ENCODE measurements at regions of chr9 and their contacts with region 1.

Region 1: DNA sequence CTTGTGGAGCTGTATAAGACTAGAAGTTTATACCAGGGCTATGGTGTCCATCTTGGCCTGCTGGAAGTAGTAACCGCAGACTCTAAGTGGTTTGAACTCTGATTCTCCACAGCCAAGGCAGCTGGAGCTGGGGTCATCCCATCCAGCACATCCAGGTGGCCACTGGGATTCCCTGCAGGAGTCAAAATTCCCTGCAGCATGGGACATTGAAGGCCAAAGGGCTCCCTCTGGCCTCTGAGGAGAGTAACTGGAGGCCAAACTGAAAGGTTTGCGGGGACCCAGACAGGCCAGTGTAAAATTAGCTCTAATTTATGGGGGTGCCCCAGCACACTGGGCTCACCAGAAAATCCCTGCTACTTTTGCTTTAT is 12.2 kb upstream of the PRXL2C start:
- DNase-seq: no peak
- ATAC-seq: no peak
- H3K4me3 ChIP-seq: no peak overlapping the region
- H3K27ac ChIP-seq: no peak overlapping the region
- H3K4me1 ChIP-seq: peaks cover 0 to 4% (median 0%) of the 10 kb centered on the region in 9 donors
- H3K27me3 ChIP-seq: no peaks in the 10 kb centered on the region
- CTCF ChIP-seq: no peak

Region 2: GRCh38 chr9:96040591-96041461 is 626.5 kb before region 1 on chr9:
- intact Hi-C with region 1: no loop called
- DNase-seq: no peak
- ATAC-seq: no peak
- H3K4me3 ChIP-seq: no peak overlapping the region
- H3K27ac ChIP-seq: no peak overlapping the region
- H3K4me1 ChIP-seq: no peaks in the 10 kb centered on the region
- H3K27me3 ChIP-seq: peaks cover 0 to 6% (median 0%) of the 10 kb centered on the region in 7 donors
- CTCF ChIP-seq: no peak

Region 3: GRCh38 chr9:96327694-96328352 is 339.5 kb before region 1 on chr9:
- intact Hi-C with region 1: loop called (anchors 2 to 5 kb)
- DNase-seq: peak in 1 of 2 donors; percentile 52
- ATAC-seq: peak; percentile 29 to 86 (median 70)
- H3K4me3 ChIP-seq: no peak overlapping the region
- H3K27ac ChIP-seq: no peak overlapping the region
- H3K4me1 ChIP-seq: no peaks in the 10 kb centered on the region
- H3K27me3 ChIP-seq: no peaks in the 10 kb centered on the region
- CTCF ChIP-seq: peak; percentile 81 to 90 (median 85)

Region 4: GRCh38 chr9:96441798-96442445 is 225.4 kb before region 1 on chr9:
- intact Hi-C with region 1: loop called in 1 of 10 experiments (anchors 2 kb)
- DNase-seq: no peak
- ATAC-seq: no peak
- H3K4me3 ChIP-seq: no peak overlapping the region
- H3K27ac ChIP-seq: no peak overlapping the region
- H3K4me1 ChIP-seq: no peaks in the 10 kb centered on the region
- H3K27me3 ChIP-seq: no peaks in the 10 kb centered on the region
- CTCF ChIP-seq: peak; percentile 11 to 54 (median 45)

Region 5: GRCh38 chr9:96574931-96575351 is 92.4 kb before region 1 on chr9:
- intact Hi-C with region 1: loop called in 1 of 10 experiments (anchors 5 kb)
- DNase-seq: no peak
- ATAC-seq: peak in 4 of 8 donors; percentile 37 to 80 (median 64)
- H3K4me3 ChIP-seq: no peak overlapping the region
- H3K27ac ChIP-seq: no peak overlapping the region
- H3K4me1 ChIP-seq: peaks cover 0 to 3% (median 0%) of the 10 kb centered on the region in 9 donors
- H3K27me3 ChIP-seq: peaks cover 0 to 9% (median 0%) of the 10 kb centered on the region in 7 donors
- CTCF ChIP-seq: no peak

Region 6: DNA sequence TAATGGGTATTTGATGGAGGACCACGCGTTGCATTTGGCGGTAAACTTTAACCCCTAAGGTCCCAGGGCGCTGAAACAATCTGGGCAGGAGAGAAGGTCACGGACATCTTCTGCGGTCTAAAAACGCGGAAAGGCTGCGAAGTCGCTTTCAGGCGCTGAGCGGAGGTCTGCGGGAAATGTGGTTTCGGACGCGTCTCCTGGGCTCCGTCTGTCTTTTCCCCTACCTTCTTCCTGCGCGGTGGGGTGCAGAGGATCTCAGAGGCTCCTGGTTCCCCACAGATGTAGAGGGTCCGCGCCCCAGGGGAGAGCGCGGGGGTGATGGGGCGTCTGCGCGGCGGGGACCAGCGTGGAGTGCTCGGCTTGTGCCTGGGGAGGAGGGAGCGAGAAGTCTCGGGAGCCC is 52.2 kb after region 1 on chr9:
- intact Hi-C with region 1: no loop called
- DNase-seq: no peak
- ATAC-seq: no peak
- H3K4me3 ChIP-seq: peak overlapping the region in 8 of 10 donors; percentile 23 to 54 (median 38)
- H3K27ac ChIP-seq: no peak overlapping the region
- H3K4me1 ChIP-seq: peaks cover 3 to 17% (median 11%) of the 10 kb centered on the region in 9 donors
- H3K27me3 ChIP-seq: peaks cover 0 to 33% (median 24%) of the 10 kb centered on the region in 7 donors
- CTCF ChIP-seq: no peak